Posterior vena cava (tissue), 2 donors: ENCODE measurements at regions of chr1 and their contacts with region 1.

Region 1: GRCh38 chr1:156439777-156440183 is 60.8 kb downstream of the MEF2D start:
- DNase-seq: no peak

Region 2: DNA sequence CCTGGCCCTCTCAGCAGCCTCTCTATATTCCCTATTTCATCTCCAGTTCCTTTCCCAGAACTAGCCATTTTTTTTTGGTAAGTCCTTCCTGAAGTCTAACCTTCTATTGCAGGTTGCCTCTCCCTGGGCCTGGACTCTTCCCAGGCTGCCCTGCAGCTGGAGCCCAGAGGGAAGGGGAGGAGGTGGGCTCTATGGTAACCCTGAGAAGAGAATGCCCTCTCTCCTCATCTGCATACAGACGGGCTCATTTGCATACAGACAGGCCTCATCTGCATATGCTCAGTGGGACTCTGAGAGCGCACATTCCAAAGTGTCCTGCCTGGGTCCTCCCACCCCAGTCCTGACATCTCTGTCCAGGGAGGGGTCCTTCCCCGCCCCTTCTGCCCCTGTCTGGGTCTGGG is 38.1 kb before region 1 on chr1:
- intact Hi-C with region 1: loop called in 1 of 2 experiments (anchors 2 kb)
- DNase-seq: no peak